Activated B cell treated with CpG ODN at 0.5 μM for 24 hours (primary cell): ENCODE measurements at regions of chr16 and their contacts with region 1.

Region 1: GRCh38 chr16:53054670-53055485 is at the start of gene CHD9:
- DNase-seq: peak; percentile 83
- ATAC-seq: peak; percentile 89
- H3K4me3 Mint-ChIP-seq: peak within 1 kb of the TSS; percentile 91
- H3K27ac Mint-ChIP-seq: peak within 1 kb of the TSS; percentile 85
- H3K4me1 Mint-ChIP-seq: peaks cover 46% of the 10 kb centered on the region
- H3K27me3 Mint-ChIP-seq: no peaks in the 10 kb centered on the region
- CTCF ChIP-seq: peak; percentile 97
- total RNA-seq, gene CHD9: 65.0 and 67.4 TPM in 2 replicates

Region 2: GRCh38 chr16:52991572-52991971 is 63.3 kb before region 1 on chr16:
- CTCF ChIA-PET with region 1: no interaction called
- POLR2A ChIA-PET with region 1: no interaction called
- intact Hi-C with region 1: no loop called
- DNase-seq: no peak
- ATAC-seq: no peak
- H3K4me3 Mint-ChIP-seq: no peak overlapping the region
- H3K27ac Mint-ChIP-seq: no peak overlapping the region
- H3K4me1 Mint-ChIP-seq: no peaks in the 10 kb centered on the region
- H3K27me3 Mint-ChIP-seq: peaks cover 3% of the 10 kb centered on the region
- CTCF ChIP-seq: no peak

Region 3: DNA sequence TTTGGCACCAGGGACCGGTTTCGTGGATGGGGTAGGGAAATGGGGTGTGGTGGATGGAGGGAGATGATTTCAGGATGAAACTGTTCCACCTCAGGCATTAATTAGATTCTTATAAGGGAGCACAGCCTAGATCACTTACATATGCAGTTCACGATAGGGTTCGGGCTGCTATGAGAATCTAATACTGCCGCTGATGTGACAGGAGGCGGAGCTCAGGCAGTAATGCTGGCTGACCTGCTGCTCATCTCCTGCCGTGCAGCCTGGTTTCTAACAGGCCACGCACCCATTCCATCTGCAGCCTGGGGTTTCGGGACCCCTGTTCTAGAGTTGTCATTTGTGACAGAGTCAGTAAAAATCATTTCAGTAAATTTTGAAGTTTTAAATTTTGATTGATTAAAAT is 99.6 kb after region 1 on chr16:
- CTCF ChIA-PET with region 1: interaction called, 95 read pairs
- POLR2A ChIA-PET with region 1: interaction called, 3 read pairs
- intact Hi-C with region 1: no loop called
- DNase-seq: no peak
- ATAC-seq: no peak
- H3K4me3 Mint-ChIP-seq: no peak overlapping the region
- H3K27ac Mint-ChIP-seq: no peak overlapping the region
- H3K4me1 Mint-ChIP-seq: no peaks in the 10 kb centered on the region
- H3K27me3 Mint-ChIP-seq: no peaks in the 10 kb centered on the region
- CTCF ChIP-seq: no peak

Region 4: GRCh38 chr16:53166099-53166498 is 111.2 kb after region 1 on chr16:
- CTCF ChIA-PET with region 1: interaction called, 95 read pairs
- POLR2A ChIA-PET with region 1: no interaction called
- intact Hi-C with region 1: no loop called
- DNase-seq: no peak
- ATAC-seq: no peak
- H3K4me3 Mint-ChIP-seq: no peak overlapping the region
- H3K27ac Mint-ChIP-seq: no peak overlapping the region
- H3K4me1 Mint-ChIP-seq: peaks cover 7% of the 10 kb centered on the region
- H3K27me3 Mint-ChIP-seq: no peaks in the 10 kb centered on the region
- CTCF ChIP-seq: no peak

Region 5: GRCh38 chr16:53187775-53188174 is 132.9 kb after region 1 on chr16:
- CTCF ChIA-PET with region 1: no interaction called
- POLR2A ChIA-PET with region 1: no interaction called
- intact Hi-C with region 1: no loop called
- DNase-seq: no peak
- ATAC-seq: no peak
- H3K4me3 Mint-ChIP-seq: no peak overlapping the region
- H3K27ac Mint-ChIP-seq: no peak overlapping the region
- H3K4me1 Mint-ChIP-seq: no peaks in the 10 kb centered on the region
- H3K27me3 Mint-ChIP-seq: no peaks in the 10 kb centered on the region
- CTCF ChIP-seq: no peak

Region 6: DNA sequence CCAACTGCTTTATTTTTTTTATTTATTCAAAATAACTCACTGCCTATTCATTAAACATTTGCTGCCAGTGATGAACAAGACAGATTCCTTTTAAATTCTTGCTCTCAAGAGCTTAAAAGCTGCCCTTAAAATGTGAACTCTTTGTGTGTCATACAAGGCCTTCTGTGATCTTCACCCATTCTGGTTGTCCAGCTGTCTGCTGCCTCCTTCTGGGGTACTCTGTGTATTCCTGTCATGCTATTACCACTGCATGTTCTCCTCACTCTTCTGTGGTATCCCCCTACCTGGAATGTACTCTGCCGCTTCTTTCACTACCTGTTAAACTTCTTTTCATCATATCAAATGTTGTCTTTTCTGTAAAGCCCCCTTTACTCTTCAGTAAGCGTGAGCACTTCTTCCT is 165.7 kb after region 1 on chr16:
- CTCF ChIA-PET with region 1: interaction called, 20 read pairs
- POLR2A ChIA-PET with region 1: interaction called, 7 read pairs
- intact Hi-C with region 1: loop called (anchors 1 kb)
- DNase-seq: no peak
- ATAC-seq: peak; percentile 60
- H3K4me3 Mint-ChIP-seq: no peak overlapping the region
- H3K27ac Mint-ChIP-seq: no peak overlapping the region
- H3K4me1 Mint-ChIP-seq: peaks cover 14% of the 10 kb centered on the region
- H3K27me3 Mint-ChIP-seq: no peaks in the 10 kb centered on the region
- CTCF ChIP-seq: no peak

Region 7: DNA sequence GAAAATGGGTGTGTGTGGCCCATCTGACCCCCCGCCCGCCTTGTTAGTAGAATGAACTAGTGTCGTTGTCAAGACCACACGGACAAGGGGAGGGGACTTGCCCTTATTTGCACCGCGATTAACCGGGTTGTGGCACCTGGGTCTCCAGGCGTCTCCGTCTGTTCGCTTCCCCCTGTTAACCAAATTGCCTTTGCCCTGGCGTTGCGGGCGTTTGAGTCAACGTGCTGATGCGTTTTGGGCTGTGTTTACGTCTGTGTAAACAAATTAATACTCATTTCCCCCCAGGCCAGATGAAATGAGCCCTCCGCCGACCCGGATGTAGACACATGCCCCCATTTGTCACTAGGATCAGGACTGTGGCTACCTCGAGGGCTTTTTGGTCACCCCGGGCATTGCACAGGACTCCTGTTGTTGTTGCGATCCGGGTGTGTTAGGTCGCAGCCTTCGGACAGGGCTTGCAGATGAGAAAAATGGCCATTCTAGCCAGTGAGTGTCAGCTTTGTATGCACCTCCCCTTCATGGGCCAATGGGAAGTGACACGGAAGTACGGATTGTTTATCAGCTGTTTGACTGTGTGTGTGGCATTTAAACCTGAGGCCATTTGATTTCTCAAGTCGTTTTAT is 380.3 kb after region 1 on chr16:
- CTCF ChIA-PET with region 1: interaction called, 3 read pairs
- POLR2A ChIA-PET with region 1: no interaction called
- intact Hi-C with region 1: loop called (anchors 2 kb)
- DNase-seq: peak; percentile 52
- ATAC-seq: peak; percentile 67
- H3K4me3 Mint-ChIP-seq: peak overlapping the region; percentile 89
- H3K27ac Mint-ChIP-seq: peak overlapping the region; percentile 93
- H3K4me1 Mint-ChIP-seq: peaks cover 34% of the 10 kb centered on the region
- H3K27me3 Mint-ChIP-seq: no peaks in the 10 kb centered on the region
- CTCF ChIP-seq: no peak